Activated CD4-positive, alpha-beta T cell treated with anti-CD3 and anti-CD28 coated beads for 36 hours (primary cell): ENCODE measurements at regions of chr19 and their contacts with region 1.

Region 1: DNA sequence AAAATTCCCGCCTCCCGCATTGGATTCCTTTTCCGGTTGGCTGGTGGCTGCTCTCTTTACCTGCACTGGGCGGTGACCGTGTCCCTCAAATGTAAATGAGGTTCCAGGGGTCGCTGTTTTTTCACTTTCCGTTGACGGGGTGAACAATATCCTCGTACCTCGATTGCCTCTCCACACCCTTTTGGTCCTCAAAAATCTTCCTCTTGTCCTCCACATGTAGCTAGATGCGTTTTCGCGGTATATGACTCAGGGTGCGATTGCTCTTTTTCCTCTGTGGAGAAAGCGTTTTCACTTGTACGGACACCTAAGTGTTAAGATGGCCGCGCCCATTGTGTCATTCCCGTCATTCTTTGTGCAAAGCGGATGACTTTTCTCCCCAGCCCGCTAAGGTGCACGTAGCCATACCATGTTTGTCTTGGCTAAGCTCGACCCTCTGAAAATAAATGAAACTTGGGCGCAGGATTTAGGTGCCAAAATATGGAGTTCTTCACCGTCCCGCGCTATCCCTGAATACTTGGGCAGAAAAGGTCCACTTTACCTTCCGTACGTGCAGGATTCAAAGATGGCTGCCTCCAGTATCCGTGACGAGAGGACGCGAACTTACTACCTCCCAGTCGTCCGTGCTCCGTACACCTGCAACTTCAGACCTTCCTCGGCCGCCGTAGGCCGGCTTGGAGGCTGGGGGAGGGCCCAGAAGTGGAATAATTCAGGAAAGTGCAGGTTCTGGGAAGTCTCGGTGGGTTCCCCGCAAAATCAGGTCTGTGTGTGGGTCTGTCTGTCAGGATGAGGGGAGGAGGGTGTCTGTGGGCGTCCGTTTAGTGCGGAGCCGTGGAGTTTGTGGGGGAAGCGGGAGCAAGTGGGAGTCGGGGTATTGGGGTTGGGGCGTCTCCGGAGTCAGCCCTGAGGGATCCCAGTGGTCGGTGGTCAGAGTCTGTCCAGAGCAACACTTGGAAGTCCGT is at the start of gene ZNF613:
- DNase-seq: peak; percentile 91
- ATAC-seq: peak; percentile 95
- H3K4me3 Mint-ChIP-seq: peak within 1 kb of the TSS; percentile 95
- H3K27ac Mint-ChIP-seq: peak within 1 kb of the TSS; percentile 97
- H3K4me1 Mint-ChIP-seq: peaks cover 20% of the 10 kb centered on the region
- H3K27me3 Mint-ChIP-seq: no peaks in the 10 kb centered on the region
- total RNA-seq, gene ZNF613: 4.2 to 6.3 TPM

Region 2: GRCh38 chr19:51593969-51594773 is 332.9 kb before region 1 on chr19:
- CTCF ChIA-PET with region 1: no interaction called
- POLR2A ChIA-PET with region 1: no interaction called
- intact Hi-C with region 1: loop called in 1 of 2 experiments (anchors 1 kb)
- DNase-seq: peak; percentile 99
- ATAC-seq: peak; percentile 100
- H3K4me3 Mint-ChIP-seq: peak overlapping the region; percentile 84
- H3K27ac Mint-ChIP-seq: peak overlapping the region; percentile 81
- H3K4me1 Mint-ChIP-seq: peaks cover 18% of the 10 kb centered on the region
- H3K27me3 Mint-ChIP-seq: peaks cover 5% of the 10 kb centered on the region

Region 3: GRCh38 chr19:51830274-51830673 is 96.8 kb before region 1 on chr19:
- CTCF ChIA-PET with region 1: no interaction called
- POLR2A ChIA-PET with region 1: no interaction called
- intact Hi-C with region 1: no loop called
- DNase-seq: no peak
- ATAC-seq: no peak
- H3K4me3 Mint-ChIP-seq: no peak overlapping the region
- H3K27ac Mint-ChIP-seq: no peak overlapping the region
- H3K4me1 Mint-ChIP-seq: no peaks in the 10 kb centered on the region
- H3K27me3 Mint-ChIP-seq: no peaks in the 10 kb centered on the region

Region 4: GRCh38 chr19:51887522-51888498 is 39.3 kb before region 1 on chr19 and contains the start of gene ZNF577:
- CTCF ChIA-PET with region 1: no interaction called
- POLR2A ChIA-PET with region 1: no interaction called
- intact Hi-C with region 1: loop called in 1 of 2 experiments (anchors 1 kb)
- DNase-seq: peak; percentile 89
- ATAC-seq: peak; percentile 88
- H3K4me3 Mint-ChIP-seq: peak within 1 kb of the TSS; percentile 95
- H3K27ac Mint-ChIP-seq: peak within 1 kb of the TSS; percentile 92
- H3K4me1 Mint-ChIP-seq: peaks cover 12% of the 10 kb centered on the region
- H3K27me3 Mint-ChIP-seq: no peaks in the 10 kb centered on the region
- total RNA-seq, gene ZNF577: 5.7 to 7.2 TPM

Region 5: DNA sequence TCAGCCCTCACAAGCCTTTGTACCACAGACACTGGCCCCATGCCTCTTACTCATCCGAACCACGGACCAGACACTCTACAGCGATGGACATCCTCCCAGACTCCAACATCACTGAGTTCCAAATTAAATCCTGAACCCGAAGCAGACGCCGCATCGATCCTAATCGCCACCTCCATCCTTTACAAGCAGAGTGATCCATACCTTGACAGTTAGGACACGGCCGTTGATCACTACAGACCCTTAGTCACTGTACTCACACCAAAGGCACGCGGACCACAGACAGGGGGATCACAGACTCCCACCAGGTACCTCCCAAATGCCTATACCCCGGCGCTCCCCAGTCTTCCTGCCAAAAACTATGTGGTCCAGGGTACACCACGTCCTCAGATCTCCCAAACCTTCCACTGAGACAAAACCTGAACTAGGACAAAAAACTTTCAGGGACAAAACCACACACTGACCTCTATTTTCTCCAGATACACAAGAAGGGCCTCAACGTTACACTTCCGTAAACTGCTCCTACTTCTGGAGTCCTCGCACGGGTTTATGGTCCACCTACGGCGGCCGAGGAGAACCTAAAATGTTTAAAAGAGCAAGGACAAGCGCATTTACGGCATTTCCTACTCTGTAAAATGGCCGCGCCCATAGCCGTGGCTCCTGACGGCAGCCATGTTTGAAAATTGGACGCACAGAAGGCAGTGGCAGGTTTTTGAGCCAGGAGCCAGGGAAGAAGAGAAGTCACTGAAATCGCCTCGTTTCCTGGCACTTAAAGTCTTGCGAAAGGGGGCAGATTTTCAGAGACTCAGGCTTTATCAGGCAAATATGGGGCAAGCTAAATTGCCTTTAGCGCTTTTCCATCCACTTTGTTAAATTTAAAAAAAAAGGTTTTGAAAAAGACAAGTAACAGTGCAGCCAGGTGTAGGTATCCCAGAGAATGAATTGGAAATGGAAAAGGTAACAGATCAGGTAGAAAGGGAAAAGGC is 59.5 kb after region 1 on chr19 and contains the start of gene ZNF350:
- CTCF ChIA-PET with region 1: no interaction called
- POLR2A ChIA-PET with region 1: no interaction called
- intact Hi-C with region 1: loop called (anchors 1 to 2 kb)
- DNase-seq: peak; percentile 94
- ATAC-seq: peak; percentile 99
- H3K4me3 Mint-ChIP-seq: peak within 1 kb of the TSS; percentile 85
- H3K27ac Mint-ChIP-seq: peak within 1 kb of the TSS; percentile 95
- H3K4me1 Mint-ChIP-seq: peaks cover 8% of the 10 kb centered on the region
- H3K27me3 Mint-ChIP-seq: no peaks in the 10 kb centered on the region
- total RNA-seq, gene ZNF350: 7.1 to 7.9 TPM

Region 6: DNA sequence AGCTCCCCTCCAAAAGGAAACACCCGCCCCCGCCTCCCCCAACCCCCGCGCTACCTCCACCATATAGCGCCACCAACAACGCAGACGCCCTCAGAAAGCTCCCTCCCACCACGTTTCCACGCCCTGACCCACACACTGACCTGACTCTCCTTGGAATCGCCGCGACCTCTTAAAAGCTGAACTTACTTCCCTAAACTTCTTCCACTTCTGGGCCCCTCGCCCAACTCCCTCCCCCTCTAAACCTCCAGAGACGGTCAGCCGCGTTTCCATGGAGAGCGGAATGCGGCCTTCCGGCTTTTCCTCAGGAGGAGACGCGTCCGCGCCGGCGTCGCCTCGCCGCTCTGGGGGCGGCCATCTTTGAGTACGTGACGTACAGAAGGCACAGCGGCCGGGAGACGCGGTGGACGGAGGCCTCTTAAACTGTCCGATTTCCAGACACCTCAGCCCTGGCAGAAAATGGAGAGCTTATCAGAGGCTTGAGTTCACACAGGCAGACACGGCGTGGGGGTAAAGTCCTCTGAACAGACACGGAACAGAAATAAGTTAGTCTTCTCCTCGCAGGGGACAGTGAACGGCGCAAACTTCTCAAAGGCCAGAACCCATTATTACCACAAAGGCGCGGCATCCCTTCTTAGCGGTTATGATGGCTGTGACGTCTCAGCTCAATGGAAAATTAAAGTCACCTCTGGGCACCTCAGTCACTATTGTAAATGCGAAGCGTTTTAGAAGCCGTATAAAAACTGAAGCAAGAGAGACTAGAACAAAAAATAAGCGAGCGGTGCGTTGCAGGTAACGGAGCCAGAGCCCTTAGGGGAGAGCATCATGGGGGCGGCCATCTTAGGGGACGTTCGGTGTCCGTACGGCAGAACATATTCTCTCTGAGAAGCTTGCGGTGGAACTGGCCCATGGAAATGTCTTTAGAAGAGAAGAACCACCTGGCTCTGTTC is 121.8 kb after region 1 on chr19 and contains the start of gene ZNF432:
- CTCF ChIA-PET with region 1: no interaction called
- POLR2A ChIA-PET with region 1: no interaction called
- intact Hi-C with region 1: loop called in 1 of 2 experiments (anchors 1 kb)
- DNase-seq: peak; percentile 88
- ATAC-seq: peak; percentile 88
- H3K4me3 Mint-ChIP-seq: peak within 1 kb of the TSS; percentile 94
- H3K27ac Mint-ChIP-seq: peak within 1 kb of the TSS; percentile 100
- H3K4me1 Mint-ChIP-seq: peaks cover 16% of the 10 kb centered on the region
- H3K27me3 Mint-ChIP-seq: no peaks in the 10 kb centered on the region
- total RNA-seq, gene ZNF432: 11.5 to 12.8 TPM